Ascending aorta (tissue), 2 donors: ENCODE measurements at regions of chr3 and their contacts with region 1.

Region 1: GRCh38 chr3:141575879-141576743 is 89.3 kb downstream of the RASA2 start:
- DNase-seq: no peak
- H3K4me3 ChIP-seq: peak overlapping the region in 1 of 2 donors; percentile 13
- H3K27ac ChIP-seq: no peak overlapping the region
- H3K4me1 ChIP-seq: no peaks in the 10 kb centered on the region
- H3K27me3 ChIP-seq: no peaks in the 10 kb centered on the region
- CTCF ChIP-seq: peak; percentile 25 to 59 (median 54)

Region 2: GRCh38 chr3:141619450-141619849 is 43.3 kb after region 1 on chr3:
- intact Hi-C with region 1: no loop called
- DNase-seq: no peak
- H3K4me3 ChIP-seq: no peak overlapping the region
- H3K27ac ChIP-seq: no peak overlapping the region
- H3K4me1 ChIP-seq: no peaks in the 10 kb centered on the region
- H3K27me3 ChIP-seq: no peaks in the 10 kb centered on the region
- CTCF ChIP-seq: no peak

Region 3: DNA sequence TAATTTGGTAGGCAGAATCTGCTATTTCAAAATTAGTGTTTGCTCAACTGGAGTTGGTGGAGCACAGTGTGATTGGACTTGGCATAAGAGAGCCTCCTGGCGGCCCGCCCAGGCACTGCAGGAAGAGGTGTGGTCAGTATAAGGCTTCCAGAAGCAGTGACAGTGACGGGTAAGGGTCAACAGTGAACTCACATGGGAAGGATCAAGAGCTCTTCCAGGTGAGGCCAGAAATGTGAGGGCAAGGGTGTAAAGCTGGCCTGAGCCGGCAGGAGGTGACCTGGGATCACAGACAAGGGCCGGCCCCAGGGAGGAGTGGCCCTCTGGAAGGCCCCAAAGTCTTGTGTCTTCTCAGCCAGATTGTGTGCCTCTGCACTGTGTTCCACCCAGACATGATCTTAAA is 68.8 kb after region 1 on chr3:
- intact Hi-C with region 1: loop called (anchors 5 kb)
- DNase-seq: peak in 1 of 2 donors; percentile 86
- H3K4me3 ChIP-seq: no peak overlapping the region
- H3K27ac ChIP-seq: no peak overlapping the region
- H3K4me1 ChIP-seq: no peaks in the 10 kb centered on the region
- H3K27me3 ChIP-seq: no peaks in the 10 kb centered on the region
- CTCF ChIP-seq: peak; percentile 55 to 64 (median 58)

Region 4: GRCh38 chr3:141913150-141913811 is 337.2 kb after region 1 on chr3:
- intact Hi-C with region 1: loop called (anchors 5 kb)
- DNase-seq: no peak
- H3K4me3 ChIP-seq: no peak overlapping the region
- H3K27ac ChIP-seq: no peak overlapping the region
- H3K4me1 ChIP-seq: no peaks in the 10 kb centered on the region
- H3K27me3 ChIP-seq: no peaks in the 10 kb centered on the region
- CTCF ChIP-seq: peak; percentile 52 to 55 (median 53)